GM10248 (cell line): ENCODE measurements at regions of chr1 and their contacts with region 1.

Region 1: GRCh38 chr1:201792534-201793305 is 36.2 kb upstream of the IPO9 start:
- DNase-seq: peak; percentile 82
- CTCF ChIP-seq: peak; percentile 95

Region 2: GRCh38 chr1:201495471-201496295 is 297.0 kb before region 1 on chr1:
- CTCF ChIA-PET with region 1: no interaction called
- POLR2A ChIA-PET with region 1: no interaction called
- DNase-seq: no peak
- CTCF ChIP-seq: no peak

Region 3: GRCh38 chr1:201719812-201720521 is 72.8 kb before region 1 on chr1:
- CTCF ChIA-PET with region 1: interaction called, 16 read pairs
- POLR2A ChIA-PET with region 1: no interaction called
- DNase-seq: no peak
- CTCF ChIP-seq: no peak

Region 4: GRCh38 chr1:201774224-201774982 is 18.3 kb before region 1 on chr1:
- CTCF ChIA-PET with region 1: interaction called, 10 read pairs
- POLR2A ChIA-PET with region 1: no interaction called
- DNase-seq: no peak
- CTCF ChIP-seq: no peak

Region 5: GRCh38 chr1:201781437-201781836 is 11.3 kb before region 1 on chr1:
- CTCF ChIA-PET with region 1: interaction called, 11 read pairs
- POLR2A ChIA-PET with region 1: no interaction called
- DNase-seq: no peak
- CTCF ChIP-seq: no peak

Region 6: GRCh38 chr1:201807958-201808632 is 15.4 kb after region 1 on chr1:
- CTCF ChIA-PET with region 1: interaction called, 30 read pairs
- POLR2A ChIA-PET with region 1: no interaction called
- DNase-seq: no peak
- CTCF ChIP-seq: no peak

Region 7: GRCh38 chr1:201813226-201813625 is 20.5 kb after region 1 on chr1:
- CTCF ChIA-PET with region 1: interaction called, 30 read pairs
- POLR2A ChIA-PET with region 1: no interaction called
- DNase-seq: no peak
- CTCF ChIP-seq: no peak